CD14-positive monocyte (primary cell): ENCODE measurements at regions of chr17 and their contacts with region 1.

Region 1: DNA sequence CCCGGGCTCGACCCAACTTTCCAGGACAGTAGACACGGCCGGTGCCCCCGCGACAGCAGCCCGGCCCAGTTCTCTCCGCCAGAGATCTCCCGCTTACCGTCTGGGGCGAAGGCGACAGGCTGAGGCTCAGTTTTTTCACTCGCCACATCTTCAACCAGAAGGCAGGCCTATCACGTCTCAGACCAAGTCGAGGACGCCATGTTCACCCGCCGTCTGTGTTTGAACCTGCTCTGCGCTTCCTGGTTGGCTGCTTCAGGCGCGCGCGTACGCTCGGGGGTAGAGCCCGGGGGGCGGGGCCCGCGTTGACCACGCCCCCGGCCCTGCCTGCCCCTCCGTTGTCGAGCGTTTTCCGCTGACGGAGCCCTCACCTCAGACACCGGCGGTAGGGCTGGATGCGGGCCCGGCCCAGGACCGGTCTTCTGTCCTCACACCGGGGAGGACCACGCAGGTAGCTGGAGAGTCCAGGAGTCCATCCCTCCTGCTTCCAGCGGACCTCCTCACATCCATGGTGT is at the start of gene SPAG5:
- DNase-seq: peak; percentile 92 to 93 (median 93)
- H3K4me3 ChIP-seq: peak within 1 kb of the TSS; percentile 62 to 82 (median 69)
- H3K4me3 Mint-ChIP-seq: peak within 1 kb of the TSS; percentile 91 to 94
- H3K27ac ChIP-seq: peak within 1 kb of the TSS; percentile 87 to 100
- H3K27ac Mint-ChIP-seq: peak within 1 kb of the TSS; percentile 96 to 99 (median 97)
- H3K4me1 ChIP-seq: peaks cover 20 to 25% of the 10 kb centered on the region in 2 donors
- H3K4me1 Mint-ChIP-seq: peaks cover 26% of the 10 kb centered on the region
- H3K27me3 ChIP-seq: no peaks in the 10 kb centered on the region
- H3K27me3 Mint-ChIP-seq: peaks cover 0 to 3% (median 0%) of the 10 kb centered on the region in 3 donors
- CTCF ChIP-seq: no peak
- polyA plus RNA-seq, gene SPAG5: 7.7 TPM in 1 of 3 donors, not detected in the others

Region 2: DNA sequence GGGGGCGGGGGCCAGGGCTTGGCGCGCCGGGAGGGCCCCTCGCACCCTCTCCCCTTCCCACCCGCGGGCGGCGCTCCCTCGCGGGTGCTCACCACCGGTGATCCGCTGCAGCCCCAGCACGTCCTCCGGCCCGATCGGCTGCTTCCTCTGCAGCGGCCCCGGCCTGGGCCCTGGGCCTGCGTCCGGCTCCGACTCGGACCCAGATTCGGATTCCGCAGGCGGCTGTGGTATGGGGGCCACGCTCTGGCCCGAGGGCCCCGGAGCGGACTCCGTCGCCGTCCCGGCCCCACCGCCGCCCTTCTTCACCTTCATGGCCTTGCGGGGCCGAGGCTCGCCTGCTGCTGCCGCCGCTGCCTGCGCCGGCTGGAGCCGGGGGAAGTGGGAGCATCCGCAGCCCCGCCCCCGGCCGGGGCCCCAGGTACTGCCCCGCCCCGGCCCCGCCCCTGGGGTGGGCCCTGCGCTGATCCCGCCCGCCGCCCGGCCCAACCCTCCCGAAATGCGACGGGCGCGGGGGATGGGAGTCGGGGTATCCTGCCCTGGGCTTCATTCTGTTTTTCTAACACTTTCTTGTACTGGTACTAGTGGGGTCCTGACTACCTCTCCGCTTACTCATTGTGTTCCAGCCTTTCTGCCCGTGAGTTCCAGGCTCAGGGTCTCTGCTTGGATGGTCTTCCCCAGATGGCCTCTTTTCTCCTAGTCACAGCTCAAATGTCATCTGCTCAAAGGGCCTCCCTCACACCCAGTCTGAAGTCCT is 46.4 kb before region 1 on chr17 and contains the start of gene UNC119:
- intact Hi-C with region 1: no loop called
- DNase-seq: peak; percentile 54 to 70 (median 62)
- H3K4me3 ChIP-seq: peak within 1 kb of the TSS; percentile 50 to 94 (median 83)
- H3K4me3 Mint-ChIP-seq: peak within 1 kb of the TSS; percentile 92 to 97
- H3K27ac ChIP-seq: peak within 1 kb of the TSS in 1 of 2 donors; percentile 73
- H3K27ac Mint-ChIP-seq: peak within 1 kb of the TSS; percentile 7 to 85 (median 72)
- H3K4me1 ChIP-seq: peaks cover 50 to 54% of the 10 kb centered on the region in 2 donors
- H3K4me1 Mint-ChIP-seq: peaks cover 50% of the 10 kb centered on the region
- H3K27me3 ChIP-seq: no peaks in the 10 kb centered on the region
- H3K27me3 Mint-ChIP-seq: peaks cover 0 to 2% (median 2%) of the 10 kb centered on the region in 3 donors
- CTCF ChIP-seq: no peak
- polyA plus RNA-seq, gene UNC119: 77.5 to 189 (median 80.2) TPM

Region 3: DNA sequence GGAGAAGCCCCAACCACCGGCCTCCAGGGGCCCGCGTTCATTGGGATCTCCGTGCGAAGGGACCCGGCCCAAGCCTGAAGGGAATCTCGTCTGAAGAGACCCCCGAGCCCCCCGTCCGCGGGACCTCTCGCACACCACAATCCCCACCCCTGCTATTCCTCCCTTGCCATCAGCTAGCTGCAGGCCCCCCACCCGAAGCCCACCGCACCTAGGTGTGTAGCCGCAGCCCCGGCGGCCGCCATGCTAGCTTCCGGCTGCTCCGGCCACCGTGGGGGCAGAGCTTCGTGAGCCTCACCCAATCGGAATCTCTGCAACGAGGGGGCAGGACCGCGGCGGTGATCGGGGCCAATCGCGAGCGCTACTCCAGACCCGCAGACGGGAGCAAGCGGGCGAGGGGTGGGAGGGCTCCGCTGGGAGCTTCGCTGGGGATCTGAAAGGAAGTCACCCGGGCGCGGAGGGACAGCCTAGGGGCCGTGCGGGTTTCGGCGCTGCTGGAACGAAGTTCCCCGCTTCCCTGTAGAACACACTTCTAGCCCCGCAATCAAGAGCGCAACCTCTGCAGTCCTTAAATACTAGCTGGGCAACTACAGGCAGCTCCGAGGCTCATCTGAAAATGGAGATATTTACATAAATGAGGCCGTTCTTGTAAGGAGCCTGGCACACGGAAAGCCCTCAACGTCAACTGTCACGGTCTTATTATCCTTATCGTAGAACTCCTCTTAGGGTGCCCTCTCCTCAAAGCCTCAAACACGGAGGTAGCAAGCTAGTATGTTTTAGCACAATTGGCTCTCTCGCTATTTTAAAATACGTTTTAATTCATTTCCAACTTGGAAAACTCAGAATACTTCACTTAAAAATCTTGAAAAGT is 27.4 kb before region 1 on chr17 and contains the start of gene PIGS:
- intact Hi-C with region 1: loop called in 1 of 2 experiments (anchors 1 kb)
- DNase-seq: peak; percentile 90
- H3K4me3 ChIP-seq: peak within 1 kb of the TSS; percentile 69 to 92 (median 89)
- H3K4me3 Mint-ChIP-seq: peak within 1 kb of the TSS; percentile 93 to 96
- H3K27ac ChIP-seq: peak within 1 kb of the TSS; percentile 35 to 71
- H3K27ac Mint-ChIP-seq: peak within 1 kb of the TSS; percentile 82 to 91 (median 86)
- H3K4me1 ChIP-seq: peaks cover 34 to 49% of the 10 kb centered on the region in 2 donors
- H3K4me1 Mint-ChIP-seq: peaks cover 50% of the 10 kb centered on the region
- H3K27me3 ChIP-seq: no peaks in the 10 kb centered on the region
- H3K27me3 Mint-ChIP-seq: peaks cover 2 to 4% (median 3%) of the 10 kb centered on the region in 3 donors
- CTCF ChIP-seq: no peak
- polyA plus RNA-seq, gene PIGS: 59.4 to 87.5 (median 84.9) TPM